Sciatic nerve (tissue), 2 donors: ENCODE measurements at regions of chr16 and their contacts with region 1.

Region 1: GRCh38 chr16:26645614-26646013 is 421.1 kb upstream of the C16orf82 start:
- DNase-seq: no peak
- ATAC-seq: no peak

Region 2: DNA sequence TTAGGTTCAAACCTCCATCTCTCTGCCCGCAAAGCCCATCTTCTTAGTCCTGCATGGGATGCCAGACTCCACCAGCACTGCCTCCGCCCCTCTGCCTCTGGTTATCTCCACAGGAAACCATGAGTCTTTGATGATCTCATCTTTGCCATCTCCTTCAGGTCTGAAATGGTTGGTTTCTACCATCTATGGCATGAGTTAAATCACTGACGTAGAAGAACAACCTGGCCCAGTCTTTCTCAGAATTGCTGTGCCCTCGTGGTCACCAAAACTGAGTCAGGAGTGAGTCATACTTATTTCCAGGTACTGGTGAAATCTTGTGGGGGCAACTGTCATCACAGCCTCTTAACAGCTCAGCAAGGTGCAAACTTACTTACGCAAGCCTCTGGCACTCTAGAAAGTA is 47.6 kb before region 1 on chr16:
- intact Hi-C with region 1: loop called (anchors 10 kb)
- DNase-seq: no peak
- ATAC-seq: no peak

Region 3: GRCh38 chr16:27025581-27025980 is 380.0 kb after region 1 on chr16:
- intact Hi-C with region 1: no loop called
- DNase-seq: no peak
- ATAC-seq: no peak